GM12878 (cell line): ENCODE measurements at regions of chr12 and their contacts with region 1.

Region 1: GRCh38 chr12:55673638-55674037 is 34.1 kb downstream of the ITGA7 start:
- DNase-seq: peak; percentile 76
- ATAC-seq: peak; percentile 100
- H3K4me3 ChIP-seq: 0 out of 2 replicates have a peak overlapping the region, but pooled peaks have one; percentile 16
- H3K27ac ChIP-seq: peak overlapping the region; percentile 62; the same call in 1 of the 2 replicates
- H3K4me1 ChIP-seq: peaks cover 10% of the 10 kb centered on the region
- H3K27me3 ChIP-seq: no peaks in the 10 kb centered on the region
- CTCF ChIP-seq: no peak
- EP300 ChIP-seq: no peak
- POLR2A ChIP-seq: peak; percentile 43; the same call in 1 of the 2 replicates
- RAD21 ChIP-seq: no peak

Region 2: DNA sequence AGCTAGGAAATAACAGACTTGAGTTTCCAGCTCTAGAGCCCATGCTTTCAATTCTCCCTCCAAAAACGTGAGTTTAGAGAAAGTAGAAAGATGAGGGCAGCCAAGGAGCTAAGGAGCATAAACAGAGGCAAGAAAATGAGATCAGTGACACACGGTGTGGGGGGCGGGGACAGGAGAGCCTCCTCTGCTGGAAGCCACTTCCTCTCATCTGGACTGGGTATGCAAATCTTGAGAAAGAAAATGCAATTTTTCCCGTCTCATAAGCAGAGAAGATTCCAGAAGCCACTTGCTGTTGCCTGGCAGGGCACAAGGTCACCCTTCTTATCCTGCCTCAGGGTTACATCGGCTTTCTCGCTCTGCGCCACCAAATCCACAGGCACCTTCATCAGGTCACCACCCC is 31.0 kb before region 1 on chr12:
- CTCF ChIA-PET with region 1: interaction called, 12 read pairs
- POLR2A ChIA-PET with region 1: no interaction called
- RAD21 ChIA-PET with region 1: interaction called, 4 read pairs
- SMC1A ChIA-PET with region 1: interaction called, 4 read pairs
- in situ Hi-C with region 1: no loop called
- intact Hi-C with region 1: no loop called
- DNase-seq: no peak
- ATAC-seq: no peak
- H3K4me3 ChIP-seq: no peak overlapping the region
- H3K27ac ChIP-seq: no peak overlapping the region
- H3K4me1 ChIP-seq: peaks cover 20% of the 10 kb centered on the region
- H3K27me3 ChIP-seq: no peaks in the 10 kb centered on the region
- CTCF ChIP-seq: no peak
- EP300 ChIP-seq: no peak
- POLR2A ChIP-seq: no peak
- RAD21 ChIP-seq: no peak